Right ventricle myocardium inferior (tissue), 1 donor: ENCODE measurements at regions of chr5 and their contacts with region 1.

Region 1: GRCh38 chr5:179821581-179822432 is 1.1 kb downstream of the SQSTM1 start:
- DNase-seq: peak; percentile 97
- ATAC-seq: peak; percentile 80

Region 2: DNA sequence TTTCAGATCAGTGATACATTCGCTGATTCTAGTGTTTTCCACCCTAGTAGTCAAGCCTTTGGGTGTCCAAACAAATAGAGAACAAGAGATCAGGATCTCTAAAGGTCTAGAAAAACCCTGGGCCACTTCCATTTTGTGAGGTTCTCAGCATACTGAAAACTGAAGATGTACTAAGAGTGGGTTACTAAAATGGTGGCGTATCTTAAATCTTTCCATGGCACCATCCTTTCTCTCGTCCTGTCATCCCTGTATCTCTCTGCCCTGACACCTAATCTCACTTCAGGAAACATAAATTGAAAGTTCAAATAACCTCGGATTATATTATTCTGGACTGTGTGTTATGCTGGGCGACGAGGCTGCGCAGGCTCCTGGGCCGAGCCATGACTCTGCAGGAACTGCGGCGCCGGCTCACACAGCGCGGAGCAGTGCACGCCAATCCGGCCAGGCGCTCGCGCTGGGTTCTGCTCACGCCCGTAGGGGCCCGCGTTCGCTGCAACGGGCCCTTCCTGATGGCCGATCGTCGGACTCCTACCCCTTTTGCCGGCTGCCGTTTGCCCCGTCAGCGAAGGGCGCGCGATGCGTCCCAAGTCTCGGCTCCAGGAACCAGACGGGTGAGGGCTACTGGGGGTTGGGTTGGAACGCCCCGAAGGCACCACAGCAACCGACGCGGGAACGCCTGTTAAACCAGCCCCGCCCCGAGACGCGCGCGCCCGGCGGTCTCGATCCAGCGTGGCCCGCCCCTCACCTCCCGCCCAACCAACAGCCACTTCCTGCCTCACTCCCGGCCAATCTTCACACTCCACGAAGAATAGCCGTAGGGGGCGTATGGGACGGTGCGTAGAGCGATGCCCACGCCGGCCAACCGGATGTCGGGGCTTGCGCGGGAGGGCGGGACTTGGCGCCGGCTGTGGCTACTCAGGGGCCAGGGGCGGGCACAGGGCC is 123.5 kb before region 1 on chr5:
- intact Hi-C with region 1: no loop called
- DNase-seq: peak; percentile 99
- ATAC-seq: peak; percentile 97

Region 3: DNA sequence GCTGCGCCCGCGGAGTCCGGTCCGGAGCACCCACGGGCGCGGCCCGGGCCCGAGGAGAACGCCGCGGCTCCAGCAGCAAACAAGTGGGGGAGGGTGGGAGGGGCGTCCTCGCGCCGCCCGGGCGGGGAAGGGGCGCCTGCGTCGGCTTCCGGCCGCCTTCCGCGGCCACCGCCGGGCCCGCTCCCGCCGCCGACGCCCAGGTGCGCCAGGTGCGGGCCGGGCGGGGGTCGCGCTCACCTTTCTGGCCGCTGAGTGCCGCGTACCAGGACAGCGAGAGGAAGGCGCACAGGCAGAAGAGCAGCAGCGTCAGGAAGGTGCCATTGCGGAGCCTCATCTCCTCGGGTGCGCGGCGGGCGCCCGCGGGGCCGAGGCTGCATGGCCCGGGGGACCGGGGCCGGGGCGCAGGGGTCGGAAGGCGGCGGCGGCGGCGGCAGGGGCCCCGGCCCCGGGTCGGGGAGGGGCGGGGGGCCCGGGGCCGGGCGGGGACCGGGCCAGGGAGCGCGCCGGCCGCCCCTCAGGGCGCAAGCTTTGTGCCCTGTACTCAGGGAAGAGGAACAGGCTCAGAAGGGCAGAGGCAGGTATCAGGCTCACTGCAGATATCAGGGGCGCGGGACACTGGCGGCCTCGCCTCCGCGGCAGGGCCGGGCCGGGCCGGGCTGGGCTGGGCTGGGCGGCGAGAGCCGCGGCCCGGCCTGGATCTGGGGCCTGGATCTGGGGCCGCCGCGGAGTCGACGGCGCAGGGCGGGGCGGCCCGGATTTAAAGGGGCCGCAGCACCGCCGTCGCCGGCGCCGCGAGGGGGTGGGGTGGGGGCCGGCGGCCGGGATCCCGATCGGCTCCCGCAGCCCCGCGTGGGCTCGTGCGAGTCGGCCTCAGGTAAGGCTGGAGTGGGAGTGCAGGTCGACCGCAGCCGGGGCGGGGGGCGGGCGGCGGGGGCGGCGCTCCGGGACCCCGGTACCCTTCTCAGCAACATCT is 15.3 kb before region 1 on chr5 and contains the start of gene MGAT4B:
- intact Hi-C with region 1: loop called (anchors 2 kb)
- DNase-seq: peak; percentile 90
- ATAC-seq: peak; percentile 93
- total RNA-seq, gene MGAT4B: 98.9 TPM

Region 4: DNA sequence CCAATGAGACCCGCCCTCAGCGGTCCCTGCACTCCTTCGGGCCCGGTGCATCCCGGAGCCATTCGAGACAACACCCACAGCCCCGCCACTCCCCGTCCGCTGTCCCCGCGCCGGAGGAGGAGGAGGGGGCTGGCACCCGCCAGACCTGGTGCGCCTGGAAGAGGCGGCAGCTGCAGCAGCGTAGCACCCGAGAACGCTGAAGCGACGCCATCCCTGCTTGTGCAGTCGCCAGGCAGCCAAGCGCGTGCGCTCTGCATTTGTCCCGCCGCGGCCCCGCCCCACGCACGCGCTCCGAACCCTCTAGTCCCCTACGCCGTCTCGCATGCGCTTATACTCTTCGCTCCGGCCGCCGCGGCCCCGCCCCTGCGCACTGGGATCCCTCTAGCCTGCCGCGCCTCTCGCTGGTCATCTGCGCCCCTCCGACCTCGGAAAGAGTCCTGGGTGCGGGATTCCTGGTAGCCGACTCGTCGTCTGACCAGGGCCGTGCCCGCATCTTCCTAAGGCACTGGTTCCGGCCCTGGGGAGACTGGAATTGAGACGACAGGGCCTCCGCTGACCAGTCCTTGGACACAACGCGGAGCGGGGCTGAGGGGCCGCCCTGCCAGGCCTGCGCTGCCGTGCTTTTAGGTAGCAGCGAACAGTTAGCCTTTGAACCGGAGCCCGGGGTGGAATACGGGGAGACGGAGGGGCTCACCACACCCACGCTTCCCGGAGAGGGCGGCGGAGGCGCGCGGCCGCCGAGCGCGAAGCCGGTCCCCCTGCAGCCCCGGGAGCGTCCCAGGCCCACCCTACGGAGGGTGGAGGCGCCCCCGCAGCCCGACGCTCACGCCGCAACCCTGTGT is 37.0 kb after region 1 on chr5 and contains the start of gene MRNIP:
- intact Hi-C with region 1: loop called (anchors 1 kb)
- DNase-seq: peak; percentile 99
- ATAC-seq: peak; percentile 100
- total RNA-seq, gene MRNIP: 12.2 TPM

Region 5: GRCh38 chr5:180233729-180234128 is 411.9 kb after region 1 on chr5:
- intact Hi-C with region 1: no loop called
- DNase-seq: no peak
- ATAC-seq: no peak